ENCODE measurements at regions of chr1 and their contacts with region 1.

Region 1: GRCh38 chr1:100955322-100955721 is 59.4 kb downstream of the SLC30A7 start:
- DNase-seq: no peak
- ATAC-seq: no peak
- H3K4me3 ChIP-seq: no peak overlapping the region
- H3K4me3 Mint-ChIP-seq: no peak overlapping the region
- H3K27ac ChIP-seq: no peak overlapping the region
- H3K27ac Mint-ChIP-seq: no peak overlapping the region
- H3K4me1 ChIP-seq: peaks cover 9% of the 10 kb centered on the region
- H3K4me1 Mint-ChIP-seq: peaks cover 55% of the 10 kb centered on the region
- H3K27me3 ChIP-seq: no peaks in the 10 kb centered on the region
- H3K27me3 Mint-ChIP-seq: no peaks in the 10 kb centered on the region
- CTCF ChIP-seq: no peak

Region 2: GRCh38 chr1:100875228-100875627 is 80.1 kb before region 1 on chr1:
- CTCF ChIA-PET with region 1: no interaction called
- POLR2A ChIA-PET with region 1: no interaction called
- intact Hi-C with region 1: no loop called
- DNase-seq: no peak
- ATAC-seq: no peak
- H3K4me3 ChIP-seq: no peak overlapping the region
- H3K4me3 Mint-ChIP-seq: no peak overlapping the region
- H3K27ac ChIP-seq: no peak overlapping the region
- H3K27ac Mint-ChIP-seq: no peak overlapping the region
- H3K4me1 ChIP-seq: no peaks in the 10 kb centered on the region
- H3K4me1 Mint-ChIP-seq: no peaks in the 10 kb centered on the region
- H3K27me3 ChIP-seq: no peaks in the 10 kb centered on the region
- H3K27me3 Mint-ChIP-seq: no peaks in the 10 kb centered on the region
- CTCF ChIP-seq: no peak

Region 3: DNA sequence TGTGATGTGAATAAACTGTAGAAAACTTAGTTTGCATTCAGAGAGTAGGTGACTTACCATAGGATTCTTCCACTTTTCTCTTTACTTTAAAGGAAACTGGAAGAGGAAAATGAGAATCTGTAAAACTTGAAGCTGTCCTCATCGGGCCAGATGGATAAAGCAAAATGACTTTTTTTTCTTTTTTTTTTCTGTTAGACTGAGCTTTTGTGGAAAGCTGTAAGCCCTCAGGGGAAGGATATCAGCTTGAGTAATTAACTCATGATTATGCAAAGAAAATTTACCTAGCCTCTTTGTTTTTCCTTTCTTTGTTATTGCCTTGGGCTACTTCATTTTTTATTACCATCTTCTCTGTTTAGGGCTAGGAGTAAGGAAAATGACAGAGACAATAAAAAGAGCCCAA is 16.9 kb after region 1 on chr1:
- CTCF ChIA-PET with region 1: interaction called, 4 read pairs
- POLR2A ChIA-PET with region 1: no interaction called
- intact Hi-C with region 1: loop called in 1 of 2 experiments (anchors 2 kb)
- DNase-seq: no peak
- ATAC-seq: no peak
- H3K4me3 ChIP-seq: no peak overlapping the region
- H3K4me3 Mint-ChIP-seq: no peak overlapping the region
- H3K27ac ChIP-seq: no peak overlapping the region
- H3K27ac Mint-ChIP-seq: peak overlapping the region; percentile 39
- H3K4me1 ChIP-seq: peaks cover 12% of the 10 kb centered on the region
- H3K4me1 Mint-ChIP-seq: peaks cover 61% of the 10 kb centered on the region
- H3K27me3 ChIP-seq: no peaks in the 10 kb centered on the region
- H3K27me3 Mint-ChIP-seq: no peaks in the 10 kb centered on the region
- CTCF ChIP-seq: no peak

Region 4: DNA sequence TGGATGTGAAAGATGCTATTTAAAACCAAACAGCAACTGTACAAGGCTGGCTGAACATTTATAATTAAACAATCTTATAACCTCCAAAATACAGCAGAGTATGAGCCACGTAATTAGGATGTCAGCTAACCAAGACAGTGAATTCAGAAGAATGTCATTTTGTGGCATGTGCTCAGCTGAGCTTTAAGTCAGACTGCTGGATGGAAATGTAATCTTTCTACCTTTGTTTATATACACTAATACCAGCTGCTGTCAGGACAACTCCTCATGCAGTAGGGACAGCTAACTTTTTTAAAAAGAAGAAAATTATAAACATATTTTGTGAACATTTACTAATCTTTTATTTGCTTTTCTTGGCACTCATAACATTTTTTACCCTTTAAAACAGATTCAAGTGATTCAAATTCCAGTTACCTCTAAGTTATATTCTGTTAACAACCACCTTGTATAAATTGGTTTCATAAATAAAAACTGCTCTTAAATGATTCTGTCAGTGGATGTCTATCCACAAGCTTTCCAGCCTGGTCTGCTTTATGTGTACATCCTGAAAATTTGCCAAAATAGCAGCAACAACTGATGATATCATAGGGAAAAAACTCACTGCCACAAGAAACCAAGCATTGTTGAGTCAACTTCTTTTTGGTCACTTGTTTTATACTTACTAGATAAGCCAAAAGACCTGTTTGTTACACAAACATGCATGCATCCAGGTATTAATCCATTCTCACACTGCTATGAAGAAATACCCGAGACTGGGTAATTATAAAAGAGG is 34.2 kb after region 1 on chr1:
- CTCF ChIA-PET with region 1: no interaction called
- POLR2A ChIA-PET with region 1: interaction called, 4 read pairs
- intact Hi-C with region 1: loop called in 1 of 2 experiments (anchors 5 kb)
- DNase-seq: no peak
- ATAC-seq: no peak
- H3K4me3 ChIP-seq: no peak overlapping the region
- H3K4me3 Mint-ChIP-seq: no peak overlapping the region
- H3K27ac ChIP-seq: no peak overlapping the region
- H3K27ac Mint-ChIP-seq: peak overlapping the region; percentile 80
- H3K4me1 ChIP-seq: peaks cover 2% of the 10 kb centered on the region
- H3K4me1 Mint-ChIP-seq: peaks cover 21% of the 10 kb centered on the region
- H3K27me3 ChIP-seq: no peaks in the 10 kb centered on the region
- H3K27me3 Mint-ChIP-seq: no peaks in the 10 kb centered on the region
- CTCF ChIP-seq: no peak

Region 5: DNA sequence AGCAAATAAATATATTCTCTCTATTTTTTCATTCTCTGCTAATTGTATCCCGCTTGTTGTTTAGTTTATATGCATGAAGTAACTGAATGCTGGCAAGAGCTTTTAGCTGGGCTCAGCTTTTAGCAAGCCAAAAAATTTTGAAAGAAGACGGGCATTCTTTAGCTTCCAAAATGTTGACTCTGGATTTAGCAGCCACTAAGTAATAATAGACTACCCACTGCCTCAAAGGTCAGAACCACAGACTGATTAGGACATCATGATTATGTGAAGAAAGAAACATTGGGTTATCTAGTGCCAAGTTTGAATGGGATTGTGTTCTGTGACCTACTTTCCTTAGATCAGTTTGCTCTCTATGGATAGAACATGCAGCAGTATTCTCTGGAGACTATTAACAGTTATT is 150.6 kb after region 1 on chr1:
- CTCF ChIA-PET with region 1: no interaction called
- POLR2A ChIA-PET with region 1: no interaction called
- intact Hi-C with region 1: no loop called
- DNase-seq: no peak
- ATAC-seq: no peak
- H3K4me3 ChIP-seq: no peak overlapping the region
- H3K4me3 Mint-ChIP-seq: no peak overlapping the region
- H3K27ac ChIP-seq: no peak overlapping the region
- H3K27ac Mint-ChIP-seq: no peak overlapping the region
- H3K4me1 ChIP-seq: peaks cover 27% of the 10 kb centered on the region
- H3K4me1 Mint-ChIP-seq: peaks cover 37% of the 10 kb centered on the region
- H3K27me3 ChIP-seq: no peaks in the 10 kb centered on the region
- H3K27me3 Mint-ChIP-seq: no peaks in the 10 kb centered on the region
- CTCF ChIP-seq: no peak

Measured in CD8-positive, alpha-beta T cell (primary cell).